Left cardiac atrium (tissue), 4 donors: ENCODE measurements at regions of chr7 and their contacts with region 1.

Region 1: GRCh38 chr7:116236020-116236630 is 25.8 kb downstream of the TES start:
- DNase-seq: peak; percentile 48
- ATAC-seq: peak; percentile 63

Region 2: DNA sequence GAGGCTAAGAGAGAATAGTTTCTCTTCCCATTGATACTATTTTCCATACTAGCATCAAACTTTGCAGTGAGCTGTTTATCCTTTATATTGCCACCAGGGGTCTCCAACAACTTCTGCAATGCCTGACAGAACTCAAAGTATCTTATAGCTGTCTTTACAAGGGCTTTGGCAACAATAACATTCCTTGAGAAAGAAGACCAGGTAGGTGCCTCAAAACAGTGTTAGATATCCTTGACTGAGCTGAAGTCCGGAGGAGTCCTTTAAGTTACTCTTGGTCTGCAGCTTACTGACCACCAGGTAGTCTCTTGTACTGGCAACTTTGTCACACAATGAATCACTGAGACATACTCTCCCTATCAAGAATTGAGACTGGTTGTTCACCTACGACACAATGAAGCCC is 55.8 kb before region 1 on chr7:
- intact Hi-C with region 1: loop called (anchors 2 to 5 kb)
- DNase-seq: no peak
- ATAC-seq: peak; percentile 53 to 56

Region 3: DNA sequence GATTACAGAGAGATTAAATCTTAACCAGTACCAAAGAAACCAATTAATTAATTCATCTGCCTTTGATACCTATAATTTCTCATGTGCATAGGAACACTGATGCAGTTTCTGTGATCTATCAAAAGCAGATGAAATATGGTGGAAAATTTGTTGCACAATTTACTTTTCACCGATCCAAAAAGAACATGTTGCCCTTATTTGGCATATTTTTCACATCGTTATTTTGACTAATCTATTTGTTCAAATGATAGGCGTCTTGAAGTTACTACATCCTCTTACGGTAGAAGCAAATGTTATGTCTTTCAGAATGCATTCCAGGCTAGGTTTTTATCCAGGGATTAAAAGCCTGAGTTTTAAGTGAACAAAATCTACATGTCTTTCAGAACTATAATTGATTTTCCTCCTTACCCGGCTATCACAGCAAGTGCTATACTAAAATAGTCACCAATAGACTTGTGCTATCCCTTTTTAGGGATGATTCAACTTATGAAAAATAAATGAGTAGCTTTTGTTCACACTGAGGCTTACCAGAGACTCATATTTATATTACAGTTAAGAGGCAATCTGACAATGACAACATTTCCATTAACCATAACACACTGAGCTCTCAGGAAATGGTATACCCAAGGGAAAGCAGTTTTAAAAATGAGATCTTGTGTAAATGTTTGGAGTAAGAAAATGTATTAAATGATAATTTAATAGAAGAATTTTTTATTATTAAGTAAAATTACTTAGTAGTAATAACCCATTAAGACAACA is 42.6 kb before region 1 on chr7:
- intact Hi-C with region 1: no loop called
- DNase-seq: no peak
- ATAC-seq: no peak